H1 (cell line): ENCODE measurements at regions of chr15 and their contacts with region 1.

Region 1: GRCh38 chr15:90482124-90483011 is 47.4 kb upstream of the CRTC3 start:
- DNase-seq: peak in 1 of 2 experiments; percentile 55
- H3K4me3 ChIP-seq: no peak overlapping the region
- H3K27ac ChIP-seq: no peak overlapping the region
- H3K4me1 ChIP-seq: no peaks in the 10 kb centered on the region
- H3K27me3 ChIP-seq: no peaks in the 10 kb centered on the region
- CTCF ChIP-seq: peak in 2 of 3 experiments; percentile 75; a peak in 3 of 4 replicates
- EP300 ChIP-seq: no peak
- POLR2A ChIP-seq: no peak
- RAD21 ChIP-seq: peak; percentile 93

Region 2: GRCh38 chr15:90300988-90301706 is 181.2 kb before region 1 on chr15:
- CTCF ChIA-PET with region 1: interaction called, 20 read pairs
- POLR2A ChIA-PET with region 1: no interaction called
- DNase-seq: peak; percentile 70 to 94
- H3K4me3 ChIP-seq: no peak overlapping the region
- H3K27ac ChIP-seq: no peak overlapping the region
- H3K4me1 ChIP-seq: peaks cover 0 to 4% (median 0%) of the 10 kb centered on the region in 4 experiments; a peak in 4 of 7 replicates
- H3K27me3 ChIP-seq: no peaks in the 10 kb centered on the region
- CTCF ChIP-seq: peak; percentile 86 to 99 (median 87)
- EP300 ChIP-seq: no peak
- POLR2A ChIP-seq: no peak
- RAD21 ChIP-seq: peak; percentile 50 to 61

Region 3: GRCh38 chr15:90362936-90363212 is 119.5 kb before region 1 on chr15:
- CTCF ChIA-PET with region 1: interaction called, 89 read pairs
- POLR2A ChIA-PET with region 1: no interaction called
- DNase-seq: no peak
- H3K4me3 ChIP-seq: no peak overlapping the region
- H3K27ac ChIP-seq: no peak overlapping the region
- H3K4me1 ChIP-seq: no peaks in the 10 kb centered on the region
- H3K27me3 ChIP-seq: 0 out of 7 replicates have a peak, but pooled peaks cover 0 to 3% (median 0%) of the 10 kb centered on the region in 4 experiments
- CTCF ChIP-seq: no peak
- EP300 ChIP-seq: no peak
- POLR2A ChIP-seq: no peak
- RAD21 ChIP-seq: no peak

Region 4: GRCh38 chr15:90436952-90437351 is 45.4 kb before region 1 on chr15:
- CTCF ChIA-PET with region 1: interaction called, 10 read pairs
- POLR2A ChIA-PET with region 1: interaction called, 3 read pairs
- DNase-seq: no peak
- H3K4me3 ChIP-seq: no peak overlapping the region
- H3K27ac ChIP-seq: no peak overlapping the region
- H3K4me1 ChIP-seq: no peaks in the 10 kb centered on the region
- H3K27me3 ChIP-seq: no peaks in the 10 kb centered on the region
- CTCF ChIP-seq: no peak
- EP300 ChIP-seq: no peak
- POLR2A ChIP-seq: no peak
- RAD21 ChIP-seq: no peak

Region 5: GRCh38 chr15:90497912-90498311 is 15.5 kb after region 1 on chr15:
- CTCF ChIA-PET with region 1: interaction called, 15 read pairs
- POLR2A ChIA-PET with region 1: no interaction called
- DNase-seq: no peak
- H3K4me3 ChIP-seq: no peak overlapping the region
- H3K27ac ChIP-seq: no peak overlapping the region
- H3K4me1 ChIP-seq: no peaks in the 10 kb centered on the region
- H3K27me3 ChIP-seq: no peaks in the 10 kb centered on the region
- CTCF ChIP-seq: no peak
- EP300 ChIP-seq: no peak
- POLR2A ChIP-seq: no peak
- RAD21 ChIP-seq: no peak